ENCODE measurements at regions of chr12 and their contacts with region 1.

Region 1: GRCh38 chr12:128076188-128076587 is 190.8 kb upstream of the TMEM132C start:
- DNase-seq: no peak
- H3K4me3 ChIP-seq: no peak overlapping the region
- H3K27ac ChIP-seq: no peak overlapping the region
- H3K4me1 ChIP-seq: no peaks in the 10 kb centered on the region
- H3K27me3 ChIP-seq: no peaks in the 10 kb centered on the region
- CTCF ChIP-seq: no peak

Region 2: GRCh38 chr12:126117502-126117901 is 1958.7 kb before region 1 on chr12:
- intact Hi-C with region 1: no loop called
- DNase-seq: no peak
- H3K4me3 ChIP-seq: no peak overlapping the region
- H3K27ac ChIP-seq: no peak overlapping the region
- H3K4me1 ChIP-seq: no peaks in the 10 kb centered on the region
- H3K27me3 ChIP-seq: no peaks in the 10 kb centered on the region
- CTCF ChIP-seq: no peak

Region 3: GRCh38 chr12:127343940-127344339 is 732.2 kb before region 1 on chr12:
- intact Hi-C with region 1: no loop called
- DNase-seq: no peak
- H3K4me3 ChIP-seq: no peak overlapping the region
- H3K27ac ChIP-seq: no peak overlapping the region
- H3K4me1 ChIP-seq: no peaks in the 10 kb centered on the region
- H3K27me3 ChIP-seq: no peaks in the 10 kb centered on the region
- CTCF ChIP-seq: no peak

Region 4: GRCh38 chr12:127455347-127456265 is 620.6 kb before region 1 on chr12:
- intact Hi-C with region 1: loop called (anchors 10 kb)
- DNase-seq: no peak
- H3K4me3 ChIP-seq: peak overlapping the region; percentile 52 to 65
- H3K27ac ChIP-seq: no peak overlapping the region
- H3K4me1 ChIP-seq: peaks cover 0 to 13% of the 10 kb centered on the region in 2 donors
- H3K27me3 ChIP-seq: no peaks in the 10 kb centered on the region
- CTCF ChIP-seq: peak in 2 of 3 experiments; percentile 17 to 24

Region 5: GRCh38 chr12:129241852-129242251 is 1165.7 kb after region 1 on chr12:
- intact Hi-C with region 1: no loop called
- DNase-seq: no peak
- H3K4me3 ChIP-seq: no peak overlapping the region
- H3K27ac ChIP-seq: no peak overlapping the region
- H3K4me1 ChIP-seq: no peaks in the 10 kb centered on the region
- H3K27me3 ChIP-seq: no peaks in the 10 kb centered on the region
- CTCF ChIP-seq: no peak